B cell (primary cell): ENCODE measurements at regions of chr2 and their contacts with region 1.

Region 1: GRCh38 chr2:175203621-175204496 is 22.3 kb upstream of the ATP5MC3 start:
- DNase-seq: peak; percentile 55
- ATAC-seq: peak; percentile 76
- H3K4me3 ChIP-seq: no peak overlapping the region
- H3K4me3 Mint-ChIP-seq: no peak overlapping the region
- H3K27ac ChIP-seq: no peak overlapping the region
- H3K27ac Mint-ChIP-seq: no peak overlapping the region
- H3K4me1 ChIP-seq: no peaks in the 10 kb centered on the region
- H3K4me1 Mint-ChIP-seq: peaks cover 4% of the 10 kb centered on the region
- H3K27me3 ChIP-seq: peaks cover 0 to 3% (median 0%) of the 10 kb centered on the region in 4 experiments
- H3K27me3 Mint-ChIP-seq: peaks cover 16% of the 10 kb centered on the region
- CTCF ChIP-seq: peak; percentile 55

Region 2: GRCh38 chr2:175147186-175147585 is 56.7 kb before region 1 on chr2:
- CTCF ChIA-PET with region 1: no interaction called
- POLR2A ChIA-PET with region 1: no interaction called
- intact Hi-C with region 1: no loop called
- DNase-seq: no peak
- ATAC-seq: no peak
- H3K4me3 ChIP-seq: no peak overlapping the region
- H3K4me3 Mint-ChIP-seq: no peak overlapping the region
- H3K27ac ChIP-seq: no peak overlapping the region
- H3K27ac Mint-ChIP-seq: no peak overlapping the region
- H3K4me1 ChIP-seq: no peaks in the 10 kb centered on the region
- H3K4me1 Mint-ChIP-seq: peaks cover 21% of the 10 kb centered on the region
- H3K27me3 ChIP-seq: no peaks in the 10 kb centered on the region
- H3K27me3 Mint-ChIP-seq: no peaks in the 10 kb centered on the region
- CTCF ChIP-seq: no peak

Region 3: DNA sequence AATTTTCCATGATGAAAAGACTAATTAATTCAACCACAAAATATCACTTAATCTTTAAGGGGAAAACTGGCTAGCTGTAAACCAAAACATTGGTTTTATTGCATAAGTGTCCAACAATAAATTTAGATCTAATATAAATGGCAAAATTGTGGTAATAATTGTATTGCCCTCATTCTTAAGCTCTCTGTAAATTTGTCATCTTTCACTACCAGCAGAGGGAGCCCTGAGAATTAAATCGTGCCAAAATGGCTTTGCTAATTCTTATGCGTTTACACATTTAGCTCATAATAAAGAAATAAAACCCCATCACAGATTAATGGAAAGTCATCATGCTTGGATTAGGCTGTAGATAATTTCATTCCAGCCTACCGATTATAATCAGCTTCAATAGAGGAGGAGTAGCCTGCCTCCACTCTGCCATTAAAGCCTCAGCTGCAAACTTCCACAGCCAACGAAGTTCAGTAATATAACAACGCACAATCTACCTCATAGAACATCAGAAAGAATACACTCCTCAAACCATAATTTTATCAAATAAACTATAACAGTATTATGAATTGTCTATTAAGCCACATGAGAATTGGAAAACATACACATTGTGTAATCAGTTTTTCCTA is 47.7 kb after region 1 on chr2:
- CTCF ChIA-PET with region 1: interaction called, 11 read pairs
- POLR2A ChIA-PET with region 1: no interaction called
- intact Hi-C with region 1: no loop called
- DNase-seq: peak; percentile 30
- ATAC-seq: no peak
- H3K4me3 ChIP-seq: no peak overlapping the region
- H3K4me3 Mint-ChIP-seq: no peak overlapping the region
- H3K27ac ChIP-seq: no peak overlapping the region
- H3K27ac Mint-ChIP-seq: no peak overlapping the region
- H3K4me1 ChIP-seq: no peaks in the 10 kb centered on the region
- H3K4me1 Mint-ChIP-seq: no peaks in the 10 kb centered on the region
- H3K27me3 ChIP-seq: peaks cover 0 to 18% (median 0%) of the 10 kb centered on the region in 4 experiments
- H3K27me3 Mint-ChIP-seq: peaks cover 38% of the 10 kb centered on the region
- CTCF ChIP-seq: peak; percentile 75

Region 4: GRCh38 chr2:175282290-175282689 is 78.4 kb after region 1 on chr2:
- CTCF ChIA-PET with region 1: interaction called, 6 read pairs
- POLR2A ChIA-PET with region 1: no interaction called
- intact Hi-C with region 1: loop called (anchors 1 kb)
- DNase-seq: peak; percentile 35
- ATAC-seq: no peak
- H3K4me3 ChIP-seq: no peak overlapping the region
- H3K4me3 Mint-ChIP-seq: no peak overlapping the region
- H3K27ac ChIP-seq: no peak overlapping the region
- H3K27ac Mint-ChIP-seq: no peak overlapping the region
- H3K4me1 ChIP-seq: no peaks in the 10 kb centered on the region
- H3K4me1 Mint-ChIP-seq: no peaks in the 10 kb centered on the region
- H3K27me3 ChIP-seq: no peaks in the 10 kb centered on the region
- H3K27me3 Mint-ChIP-seq: peaks cover 4% of the 10 kb centered on the region
- CTCF ChIP-seq: peak; percentile 51